GM12878 (cell line): ENCODE measurements at regions of chrX and their contacts with region 1.

Region 1: GRCh38 chrX:23901805-23902204 is 5.9 kb downstream of the APOO start:
- DNase-seq: peak; percentile 60
- ATAC-seq: peak; percentile 85
- H3K4me3 ChIP-seq: no peak overlapping the region
- H3K27ac ChIP-seq: peak overlapping the region; percentile 71
- H3K4me1 ChIP-seq: peaks cover 12% of the 10 kb centered on the region
- H3K27me3 ChIP-seq: no peaks in the 10 kb centered on the region
- CTCF ChIP-seq: peak; percentile 46 to 72 (median 50); a peak in 5 of 6 replicates
- EP300 ChIP-seq: no peak
- POLR2A ChIP-seq: no peak
- RAD21 ChIP-seq: peak; percentile 73

Region 2: GRCh38 chrX:23633834-23634580 is 267.8 kb before region 1 on chrX:
- CTCF ChIA-PET with region 1: no interaction called
- POLR2A ChIA-PET with region 1: no interaction called
- RAD21 ChIA-PET with region 1: no interaction called
- SMC1A ChIA-PET with region 1: no interaction called
- in situ Hi-C with region 1: no loop called
- intact Hi-C with region 1: no loop called
- DNase-seq: no peak
- ATAC-seq: peak; percentile 64
- H3K4me3 ChIP-seq: no peak overlapping the region
- H3K27ac ChIP-seq: no peak overlapping the region
- H3K4me1 ChIP-seq: no peaks in the 10 kb centered on the region
- H3K27me3 ChIP-seq: no peaks in the 10 kb centered on the region; a peak in 1 of 4 replicates
- CTCF ChIP-seq: peak in 1 of 3 experiments; percentile 46; a peak in 1 of 6 replicates
- EP300 ChIP-seq: no peak
- POLR2A ChIP-seq: no peak
- RAD21 ChIP-seq: peak; percentile 35; the same call in 1 of the 2 replicates

Region 3: DNA sequence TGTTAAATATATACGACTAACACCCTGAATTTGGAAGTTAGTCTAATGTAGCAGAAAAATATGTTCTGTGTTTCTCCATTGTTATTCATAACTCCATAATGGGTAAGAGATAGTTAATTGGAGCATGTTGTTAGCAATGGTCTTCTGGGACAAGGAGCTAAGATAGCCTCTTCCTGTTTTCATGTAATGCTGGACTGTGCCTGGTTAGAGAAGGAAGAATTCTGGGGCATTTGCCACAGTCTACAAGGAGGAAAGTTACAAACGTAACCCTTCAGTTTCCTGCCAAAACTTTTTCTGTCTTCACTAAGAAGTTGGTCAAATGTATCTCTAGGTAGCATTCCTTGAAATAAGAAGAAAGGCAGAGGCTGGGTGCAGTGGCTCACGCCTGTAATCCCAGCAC is 228.7 kb before region 1 on chrX:
- CTCF ChIA-PET with region 1: interaction called, 10 read pairs
- POLR2A ChIA-PET with region 1: interaction called, 3 read pairs
- RAD21 ChIA-PET with region 1: interaction called, 3 read pairs
- SMC1A ChIA-PET with region 1: interaction called, 8 read pairs
- in situ Hi-C with region 1: no loop called
- intact Hi-C with region 1: no loop called
- DNase-seq: no peak
- ATAC-seq: no peak
- H3K4me3 ChIP-seq: no peak overlapping the region
- H3K27ac ChIP-seq: no peak overlapping the region
- H3K4me1 ChIP-seq: no peaks in the 10 kb centered on the region
- H3K27me3 ChIP-seq: no peaks in the 10 kb centered on the region
- CTCF ChIP-seq: no peak
- EP300 ChIP-seq: no peak
- POLR2A ChIP-seq: no peak
- RAD21 ChIP-seq: no peak

Region 4: DNA sequence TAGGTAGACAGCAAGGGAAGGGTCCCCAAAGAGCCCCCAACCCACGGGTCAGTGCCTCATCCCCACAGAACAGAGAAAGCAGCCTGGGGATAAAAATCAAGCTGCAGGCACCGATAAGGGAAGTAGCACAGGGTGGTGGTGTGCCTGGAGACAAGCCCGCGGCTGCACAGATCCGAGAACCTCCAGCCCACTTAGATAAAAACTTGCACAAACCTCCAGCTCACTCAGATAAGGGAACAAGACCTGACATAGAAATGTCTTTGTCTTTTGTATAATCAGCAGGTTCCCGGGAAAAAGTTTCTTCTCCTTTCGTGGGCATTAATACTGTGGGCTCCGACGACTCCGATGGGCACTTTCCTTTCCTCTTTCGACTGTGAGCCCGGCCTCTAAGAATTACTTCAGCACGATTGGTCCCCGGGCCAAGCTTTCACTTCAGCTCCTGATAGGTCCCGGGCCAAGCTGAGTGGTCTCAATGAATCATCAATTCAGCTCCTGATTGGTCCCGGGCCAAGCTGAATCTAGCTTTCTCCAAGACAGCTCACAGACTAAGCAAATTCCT is 202.1 kb before region 1 on chrX:
- CTCF ChIA-PET with region 1: interaction called, 154 read pairs
- POLR2A ChIA-PET with region 1: interaction called, 7 read pairs
- RAD21 ChIA-PET with region 1: interaction called, 59 read pairs
- SMC1A ChIA-PET with region 1: interaction called, 71 read pairs
- in situ Hi-C with region 1: loop called (anchors 5 kb)
- intact Hi-C with region 1: loop called (anchors 1 kb)
- DNase-seq: no peak
- ATAC-seq: peak; percentile 59
- H3K4me3 ChIP-seq: no peak overlapping the region
- H3K27ac ChIP-seq: no peak overlapping the region
- H3K4me1 ChIP-seq: no peaks in the 10 kb centered on the region
- H3K27me3 ChIP-seq: no peaks in the 10 kb centered on the region
- CTCF ChIP-seq: no peak
- EP300 ChIP-seq: no peak
- POLR2A ChIP-seq: no peak
- RAD21 ChIP-seq: no peak

Region 5: DNA sequence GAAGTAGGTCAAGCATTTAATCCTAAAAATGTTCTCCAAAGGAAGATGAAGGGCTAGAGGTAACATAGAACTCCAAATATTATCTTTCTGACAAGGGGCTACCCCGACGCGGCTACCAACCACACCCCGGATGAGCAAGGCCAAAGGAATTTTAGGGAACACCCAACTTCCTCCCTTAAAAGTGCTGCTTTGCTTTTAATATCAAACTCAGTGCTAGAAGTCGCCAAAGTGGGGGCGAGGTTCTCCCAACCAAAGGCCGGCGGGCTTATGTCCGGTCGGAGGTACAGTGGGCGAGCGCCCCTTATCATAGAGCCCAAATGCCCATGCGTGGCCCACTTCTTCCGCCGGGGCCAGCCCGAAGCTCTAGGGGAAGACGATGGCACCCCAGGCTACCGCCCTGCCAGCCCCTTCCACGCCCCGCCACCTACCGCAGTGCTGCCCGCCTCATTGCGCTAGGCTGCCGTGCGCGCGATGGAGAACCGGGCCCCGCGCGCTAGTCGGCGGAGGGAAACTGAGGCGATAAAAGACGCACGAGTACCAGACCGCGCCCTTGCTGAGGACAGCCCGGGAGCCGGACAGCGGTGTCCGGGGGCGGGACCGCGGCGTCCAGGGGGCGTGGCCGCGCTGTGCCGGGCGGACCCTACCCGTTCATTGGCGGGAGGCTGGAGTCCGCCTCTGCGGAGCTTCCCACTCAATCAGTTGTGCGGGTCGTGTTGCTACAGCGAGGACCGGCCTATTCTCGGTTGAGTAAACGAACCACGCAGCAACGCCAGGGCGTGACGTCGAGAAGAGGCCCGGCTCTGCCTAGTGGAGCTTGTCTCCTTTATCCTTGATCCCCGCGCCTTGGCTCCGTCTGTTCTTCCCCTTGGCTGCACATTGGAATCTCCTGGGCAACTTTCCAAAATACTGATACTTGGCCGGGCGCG is 158.8 kb before region 1 on chrX and contains the start of gene ACOT9:
- CTCF ChIA-PET with region 1: interaction called, 21 read pairs
- POLR2A ChIA-PET with region 1: interaction called, 4 read pairs
- RAD21 ChIA-PET with region 1: interaction called, 18 read pairs
- SMC1A ChIA-PET with region 1: interaction called, 10 read pairs
- in situ Hi-C with region 1: no loop called
- intact Hi-C with region 1: no loop called
- DNase-seq: peak; percentile 53
- ATAC-seq: peak; percentile 94
- H3K4me3 ChIP-seq: peak within 1 kb of the TSS; percentile 73
- H3K27ac ChIP-seq: peak within 1 kb of the TSS; percentile 74
- H3K4me1 ChIP-seq: no peaks in the 10 kb centered on the region
- H3K27me3 ChIP-seq: no peaks in the 10 kb centered on the region
- CTCF ChIP-seq: no peak
- EP300 ChIP-seq: no peak
- POLR2A ChIP-seq: peak; percentile 60; the same call in 1 of the 2 replicates
- RAD21 ChIP-seq: no peak
- polyA plus RNA-seq, gene ACOT9: 23.7 to 24.5 TPM

Region 6: GRCh38 chrX:23773601-23774175 is 128.1 kb before region 1 on chrX:
- CTCF ChIA-PET with region 1: interaction called, 12 read pairs
- POLR2A ChIA-PET with region 1: interaction called, 12 read pairs
- RAD21 ChIA-PET with region 1: interaction called, 15 read pairs
- SMC1A ChIA-PET with region 1: interaction called, 8 read pairs
- in situ Hi-C with region 1: no loop called
- intact Hi-C with region 1: no loop called
- DNase-seq: peak; percentile 36
- ATAC-seq: peak; percentile 91
- H3K4me3 ChIP-seq: no peak overlapping the region
- H3K27ac ChIP-seq: peak overlapping the region; percentile 78; the same call in 1 of the 2 replicates
- H3K4me1 ChIP-seq: no peaks in the 10 kb centered on the region
- H3K27me3 ChIP-seq: no peaks in the 10 kb centered on the region
- CTCF ChIP-seq: no peak
- EP300 ChIP-seq: peak in 1 of 2 experiments; percentile 14; a peak in 1 of 4 replicates
- POLR2A ChIP-seq: no peak
- RAD21 ChIP-seq: no peak

Region 7: GRCh38 chrX:23788521-23788920 is 113.3 kb before region 1 on chrX:
- CTCF ChIA-PET with region 1: interaction called, 123 read pairs
- POLR2A ChIA-PET with region 1: interaction called, 26 read pairs
- RAD21 ChIA-PET with region 1: interaction called, 96 read pairs
- SMC1A ChIA-PET with region 1: interaction called, 82 read pairs
- in situ Hi-C with region 1: loop called (anchors 5 kb)
- intact Hi-C with region 1: loop called (anchors 1 kb)
- DNase-seq: no peak
- ATAC-seq: peak; percentile 31
- H3K4me3 ChIP-seq: no peak overlapping the region
- H3K27ac ChIP-seq: no peak overlapping the region
- H3K4me1 ChIP-seq: no peaks in the 10 kb centered on the region
- H3K27me3 ChIP-seq: no peaks in the 10 kb centered on the region
- CTCF ChIP-seq: no peak
- EP300 ChIP-seq: no peak
- POLR2A ChIP-seq: no peak
- RAD21 ChIP-seq: no peak

Region 8: DNA sequence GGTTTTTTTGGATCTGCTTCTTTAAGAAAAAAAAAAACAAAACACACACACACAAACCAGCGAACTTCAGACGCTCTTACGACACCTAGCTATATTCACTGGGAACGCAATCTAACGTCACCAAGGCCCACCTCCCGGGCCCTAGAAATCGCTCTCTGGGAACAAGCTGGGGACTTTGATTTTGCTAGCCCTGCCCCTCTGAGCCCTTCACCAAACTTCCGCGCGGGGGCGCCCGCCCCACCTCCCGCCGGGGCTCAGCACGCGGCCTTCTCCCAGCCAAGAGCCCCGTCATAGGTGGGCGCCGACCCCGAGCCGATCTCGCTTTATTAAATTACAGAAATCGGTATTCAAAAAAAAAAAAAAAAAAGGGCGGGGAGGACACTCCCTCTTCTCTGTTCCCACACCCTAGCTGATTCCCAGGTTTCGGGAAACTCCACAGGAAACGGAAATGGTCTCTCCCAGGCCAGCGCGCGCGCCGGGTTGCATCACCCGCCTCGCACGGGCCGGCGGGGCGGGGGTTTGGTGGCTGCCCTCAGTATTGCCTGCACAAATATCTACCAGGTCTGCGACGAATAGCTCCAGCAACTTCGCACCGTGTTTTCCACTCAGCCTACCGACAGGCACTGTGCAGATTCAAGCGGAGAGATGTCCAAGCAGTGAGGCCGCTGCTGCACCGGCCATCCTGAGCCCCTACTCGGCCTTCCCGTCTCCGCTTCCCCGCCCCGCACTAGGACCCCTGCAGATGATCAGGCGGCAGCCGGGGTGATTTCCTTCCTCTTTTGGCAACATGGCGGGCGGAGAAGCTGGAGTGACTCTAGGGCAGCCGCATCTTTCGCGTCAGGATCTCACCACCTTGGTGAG is 152.6 kb after region 1 on chrX and contains the start of gene EIF2S3:
- CTCF ChIA-PET with region 1: interaction called, 39 read pairs
- POLR2A ChIA-PET with region 1: interaction called, 31 read pairs
- RAD21 ChIA-PET with region 1: interaction called, 44 read pairs
- SMC1A ChIA-PET with region 1: interaction called, 37 read pairs
- in situ Hi-C with region 1: no loop called
- intact Hi-C with region 1: loop called (anchors 1 kb)
- DNase-seq: peak; percentile 88
- ATAC-seq: peak; percentile 91
- H3K4me3 ChIP-seq: peak within 1 kb of the TSS; percentile 72
- H3K27ac ChIP-seq: peak within 1 kb of the TSS; percentile 97
- H3K4me1 ChIP-seq: no peaks in the 10 kb centered on the region
- H3K27me3 ChIP-seq: no peaks in the 10 kb centered on the region
- CTCF ChIP-seq: peak; percentile 64 to 80 (median 74)
- EP300 ChIP-seq: peak; percentile 34 to 66; a peak in 3 of 4 replicates
- POLR2A ChIP-seq: peak; percentile 99
- RAD21 ChIP-seq: peak; percentile 41
- polyA plus RNA-seq, gene EIF2S3: 120 to 135 TPM

Region 9: DNA sequence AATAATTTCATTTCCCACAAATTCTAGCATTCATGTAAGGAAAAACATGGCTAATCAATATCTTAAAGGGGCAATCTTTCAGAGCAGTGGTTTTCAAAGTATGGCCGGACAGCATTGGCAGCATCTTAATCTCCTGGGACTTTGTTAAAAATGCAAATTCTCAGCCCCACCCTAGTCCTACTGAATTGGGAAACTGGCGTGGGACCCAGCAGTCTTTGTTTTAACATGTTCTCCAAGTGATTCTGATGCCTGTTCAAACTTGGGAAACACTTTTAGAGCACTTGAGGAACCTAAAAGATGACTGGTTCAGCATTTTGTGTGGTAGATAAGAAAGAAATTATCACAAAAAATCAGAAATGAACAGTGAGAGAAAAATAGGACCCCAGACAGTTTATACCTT is 313.5 kb after region 1 on chrX:
- CTCF ChIA-PET with region 1: no interaction called
- POLR2A ChIA-PET with region 1: no interaction called
- RAD21 ChIA-PET with region 1: no interaction called
- SMC1A ChIA-PET with region 1: no interaction called
- in situ Hi-C with region 1: no loop called
- intact Hi-C with region 1: no loop called
- DNase-seq: no peak
- ATAC-seq: no peak
- H3K4me3 ChIP-seq: no peak overlapping the region
- H3K27ac ChIP-seq: no peak overlapping the region
- H3K4me1 ChIP-seq: no peaks in the 10 kb centered on the region
- H3K27me3 ChIP-seq: no peaks in the 10 kb centered on the region
- CTCF ChIP-seq: no peak
- EP300 ChIP-seq: no peak
- POLR2A ChIP-seq: no peak
- RAD21 ChIP-seq: no peak